Activated T-helper 2 cell treated with anti-CD3 and anti-CD28 coated beads, Interferon-gamma antibody, Interleukin-2, Interleukin-4, amounts not matched to agents 10 μg/mL and 5 μg/mL and 100 μg/mL, durations not matched to agents 14 hours and 24 hours and 36 hours (primary cell): ENCODE measurements at regions of chr9 and their contacts with region 1.

Region 1: DNA sequence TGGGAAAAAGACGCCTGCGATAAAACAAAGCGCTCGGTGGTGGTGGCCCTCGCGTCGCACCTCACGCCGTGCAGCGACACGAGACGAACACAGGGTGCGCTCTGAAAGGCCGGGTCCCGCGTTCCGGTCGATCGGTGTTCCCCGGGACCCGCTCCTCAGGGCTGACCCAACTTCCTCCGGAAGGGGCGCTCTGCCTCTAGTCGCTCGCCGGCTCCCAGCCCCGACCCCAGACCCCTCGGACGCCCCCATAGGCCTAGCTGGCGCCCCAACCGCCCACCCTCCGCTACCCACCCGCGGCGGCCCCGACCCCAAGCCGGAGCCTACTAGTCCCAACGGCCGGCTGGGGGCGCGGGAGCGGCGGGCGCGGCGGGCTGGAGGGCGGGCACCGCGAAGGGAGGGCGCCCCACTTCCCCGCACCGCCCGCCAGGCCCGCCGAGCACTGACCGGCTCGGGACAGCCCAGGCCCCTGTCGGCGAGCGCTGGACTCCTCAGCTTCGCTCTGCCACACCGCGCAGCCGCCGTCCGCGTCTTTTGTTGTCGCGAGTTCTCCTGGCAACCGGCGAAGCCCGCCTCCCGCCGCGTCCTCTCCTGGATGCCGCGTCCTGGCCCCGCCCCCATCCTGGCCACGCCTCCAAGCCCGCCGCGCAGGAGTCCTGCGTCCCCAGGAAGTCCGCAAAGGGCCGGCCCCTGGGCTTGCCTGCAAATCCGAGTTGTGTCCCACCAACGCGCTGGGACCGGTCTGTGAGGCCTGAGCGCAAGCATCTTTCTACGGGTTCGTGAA is at the start of gene KIF27:
- DNase-seq: peak; percentile 97
- H3K4me3 Mint-ChIP-seq: peak within 1 kb of the TSS; percentile 78
- H3K27ac Mint-ChIP-seq: peak within 1 kb of the TSS; percentile 90
- H3K4me1 Mint-ChIP-seq: peaks cover 19% of the 10 kb centered on the region
- H3K27me3 Mint-ChIP-seq: no peaks in the 10 kb centered on the region
- total RNA-seq, gene KIF27: 2.3 and 2.7 TPM in 2 replicates

Region 2: DNA sequence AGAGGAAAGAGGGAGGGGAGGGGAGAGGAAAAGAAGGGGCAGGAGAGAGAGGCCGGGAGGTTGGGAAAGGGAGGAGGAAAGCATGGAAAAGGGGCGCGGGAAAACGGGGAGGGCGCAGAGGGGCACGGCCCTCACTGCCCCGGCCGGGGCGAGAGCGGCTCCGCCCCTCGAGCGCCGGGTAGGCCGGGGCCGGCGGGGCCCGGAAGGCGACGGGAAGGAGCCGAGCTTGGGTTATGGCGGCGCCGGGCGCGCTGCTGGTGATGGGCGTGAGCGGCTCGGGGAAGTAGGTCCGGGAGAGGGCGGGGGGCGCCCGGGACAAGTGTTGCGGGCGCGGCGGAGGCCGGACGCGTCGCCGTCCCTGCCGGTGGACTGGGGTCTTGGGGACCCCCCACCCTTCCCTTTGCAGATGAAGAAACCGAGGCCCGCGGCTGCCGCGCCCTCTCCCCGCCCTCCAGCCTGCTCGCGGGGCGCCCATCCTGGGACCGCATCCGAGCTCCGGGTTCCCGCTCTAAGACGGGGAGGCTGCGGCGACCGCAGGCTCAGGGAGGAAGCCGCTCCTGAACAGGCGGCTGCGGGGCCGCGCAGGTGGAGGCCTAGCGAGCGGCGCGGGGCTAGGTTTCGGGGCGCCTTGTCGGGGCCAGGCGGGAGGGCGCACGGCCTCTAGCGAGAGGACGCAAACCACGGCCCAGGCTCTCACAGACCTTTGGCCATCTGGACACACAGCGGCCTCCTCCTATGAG is 298.0 kb before region 1 on chr9 and contains the start of gene IDNK:
- intact Hi-C with region 1: loop called (anchors 1 kb)
- DNase-seq: peak; percentile 63
- H3K4me3 Mint-ChIP-seq: peak within 1 kb of the TSS; percentile 90
- H3K27ac Mint-ChIP-seq: peak within 1 kb of the TSS; percentile 99
- H3K4me1 Mint-ChIP-seq: peaks cover 22% of the 10 kb centered on the region
- H3K27me3 Mint-ChIP-seq: peaks cover 8% of the 10 kb centered on the region
- total RNA-seq, gene IDNK: 4.9 and 5.1 TPM in 2 replicates

Region 3: GRCh38 chr9:83956434-83957247 is 35.5 kb after region 1 on chr9:
- intact Hi-C with region 1: loop called (anchors 2 kb)
- DNase-seq: peak; percentile 65
- H3K4me3 Mint-ChIP-seq: peak overlapping the region; percentile 99
- H3K27ac Mint-ChIP-seq: peak overlapping the region; percentile 98
- H3K4me1 Mint-ChIP-seq: peaks cover 10% of the 10 kb centered on the region
- H3K27me3 Mint-ChIP-seq: no peaks in the 10 kb centered on the region

Region 4: DNA sequence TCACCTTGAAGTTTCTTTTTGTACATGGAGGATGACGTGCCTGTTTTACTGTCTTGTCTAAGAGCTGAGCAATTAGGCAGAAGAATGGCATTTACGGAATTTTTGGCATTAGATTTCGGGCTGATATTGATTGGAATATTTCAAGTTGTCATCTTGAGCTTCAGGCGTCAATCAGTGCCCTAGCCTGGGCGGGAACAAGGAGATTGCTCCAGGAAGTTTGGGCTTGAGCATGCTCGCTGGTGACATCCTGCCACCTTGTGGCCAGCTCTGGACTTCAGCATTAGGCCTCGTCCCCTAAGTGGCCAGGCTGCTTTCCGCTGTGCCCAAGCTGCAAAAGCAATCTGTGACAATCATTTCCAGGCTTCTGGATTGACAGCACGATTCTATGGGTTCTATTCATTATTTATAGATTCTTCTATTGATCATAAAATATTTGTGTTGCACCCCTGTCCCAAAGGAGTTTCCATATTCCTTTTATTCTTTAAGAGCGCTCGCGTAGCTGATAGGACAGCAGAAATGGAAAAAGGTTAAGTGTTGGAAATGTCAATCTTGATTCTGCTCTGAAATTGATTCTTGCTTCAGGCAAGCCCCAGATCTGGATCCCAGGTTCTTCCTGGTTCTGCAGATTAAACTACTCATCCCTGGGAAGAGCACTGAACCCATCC is 340.1 kb after region 1 on chr9:
- intact Hi-C with region 1: loop called (anchors 5 kb)
- DNase-seq: peak; percentile 25
- H3K4me3 Mint-ChIP-seq: no peak overlapping the region
- H3K27ac Mint-ChIP-seq: no peak overlapping the region
- H3K4me1 Mint-ChIP-seq: peaks cover 7% of the 10 kb centered on the region
- H3K27me3 Mint-ChIP-seq: peaks cover 9% of the 10 kb centered on the region